Right cardiac atrium (tissue), 5 donors: ENCODE measurements at regions of chr15 and their contacts with region 1.

Region 1: GRCh38 chr15:63288778-63289378 is 11.5 kb downstream of the APH1B start:
- DNase-seq: no peak
- ATAC-seq: peak in 1 of 2 donors; percentile 57
- H3K4me3 ChIP-seq: no peak overlapping the region
- H3K27ac ChIP-seq: no peak overlapping the region
- H3K4me1 ChIP-seq: peaks cover 1% of the 10 kb centered on the region
- H3K27me3 ChIP-seq: no peaks in the 10 kb centered on the region

Region 2: DNA sequence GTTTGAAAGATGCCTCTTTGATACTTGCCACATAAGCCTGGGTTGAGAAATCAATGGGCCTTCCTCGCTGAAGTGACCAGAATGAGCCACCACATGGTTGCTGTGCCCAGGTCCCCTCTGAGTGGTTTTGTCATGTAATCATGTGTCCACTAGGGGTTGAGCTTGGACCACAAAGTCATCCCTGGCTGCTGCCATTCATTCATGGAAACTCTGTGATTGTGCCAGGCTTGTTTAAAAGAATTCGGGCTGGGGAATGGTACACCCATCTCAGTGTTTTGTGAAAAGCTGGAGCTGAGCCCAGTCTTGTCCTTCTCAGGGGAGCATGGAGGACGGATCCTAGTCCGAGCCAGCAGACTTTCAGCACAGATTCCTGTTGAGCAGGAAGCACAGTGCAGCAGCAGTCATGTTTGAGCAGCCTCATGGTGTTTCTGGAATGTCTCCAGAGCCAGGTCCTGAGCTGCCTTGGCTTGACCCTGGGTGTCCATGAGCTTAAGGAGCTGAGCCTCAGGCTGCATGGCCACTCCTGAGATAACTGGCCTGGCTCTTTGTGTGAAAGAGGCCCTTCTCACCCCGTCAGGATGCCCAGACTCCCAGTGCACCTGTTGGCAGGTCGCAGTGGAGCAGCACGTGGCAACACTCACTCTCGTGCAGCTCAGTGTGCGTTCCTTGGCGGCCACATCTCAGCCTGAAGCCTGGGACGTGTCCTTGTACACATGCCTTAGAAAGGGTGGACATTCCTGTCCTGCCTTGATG is 506.7 kb before region 1 on chr15:
- intact Hi-C with region 1: no loop called
- DNase-seq: peak; percentile 87 to 90 (median 87)
- ATAC-seq: peak; percentile 92
- H3K4me3 ChIP-seq: no peak overlapping the region
- H3K27ac ChIP-seq: peak overlapping the region; percentile 78
- H3K4me1 ChIP-seq: peaks cover 5% of the 10 kb centered on the region
- H3K27me3 ChIP-seq: no peaks in the 10 kb centered on the region

Region 3: DNA sequence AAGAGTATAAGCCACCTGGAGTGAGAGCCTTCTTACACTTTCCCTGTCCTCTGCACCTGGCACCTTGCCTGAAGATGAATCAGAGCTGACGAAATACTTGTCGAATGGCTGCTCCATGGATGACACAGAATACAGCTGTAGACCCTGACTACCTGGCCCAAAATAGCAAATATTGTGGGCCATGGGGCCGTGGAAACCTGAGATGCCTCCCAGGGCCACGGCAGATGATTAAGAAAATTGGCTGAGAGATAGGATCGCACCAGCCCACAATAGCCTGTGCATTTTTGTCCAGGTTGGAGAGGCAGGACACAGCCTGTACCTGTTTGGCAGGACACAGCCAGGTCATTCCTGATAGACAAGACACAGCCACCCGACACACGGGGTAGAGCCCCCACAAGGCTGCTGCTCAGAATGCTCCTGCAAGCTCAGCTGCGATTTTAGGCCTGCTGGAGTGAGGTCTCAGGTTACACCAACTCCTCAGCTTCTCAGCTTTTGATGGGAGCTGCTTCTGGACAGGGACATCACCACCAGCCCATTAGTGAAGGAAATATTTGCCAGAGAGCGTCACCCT is 269.3 kb before region 1 on chr15:
- intact Hi-C with region 1: no loop called
- DNase-seq: peak in 1 of 3 donors; percentile 16
- ATAC-seq: no peak
- H3K4me3 ChIP-seq: no peak overlapping the region
- H3K27ac ChIP-seq: no peak overlapping the region
- H3K4me1 ChIP-seq: peaks cover 7% of the 10 kb centered on the region
- H3K27me3 ChIP-seq: no peaks in the 10 kb centered on the region

Region 4: GRCh38 chr15:63389902-63390670 is 101.2 kb after region 1 on chr15:
- intact Hi-C with region 1: loop called in 1 of 4 experiments (anchors 5 kb)
- DNase-seq: peak in 1 of 3 donors; percentile 73
- ATAC-seq: no peak
- H3K4me3 ChIP-seq: no peak overlapping the region
- H3K27ac ChIP-seq: no peak overlapping the region
- H3K4me1 ChIP-seq: no peaks in the 10 kb centered on the region
- H3K27me3 ChIP-seq: no peaks in the 10 kb centered on the region

Region 5: DNA sequence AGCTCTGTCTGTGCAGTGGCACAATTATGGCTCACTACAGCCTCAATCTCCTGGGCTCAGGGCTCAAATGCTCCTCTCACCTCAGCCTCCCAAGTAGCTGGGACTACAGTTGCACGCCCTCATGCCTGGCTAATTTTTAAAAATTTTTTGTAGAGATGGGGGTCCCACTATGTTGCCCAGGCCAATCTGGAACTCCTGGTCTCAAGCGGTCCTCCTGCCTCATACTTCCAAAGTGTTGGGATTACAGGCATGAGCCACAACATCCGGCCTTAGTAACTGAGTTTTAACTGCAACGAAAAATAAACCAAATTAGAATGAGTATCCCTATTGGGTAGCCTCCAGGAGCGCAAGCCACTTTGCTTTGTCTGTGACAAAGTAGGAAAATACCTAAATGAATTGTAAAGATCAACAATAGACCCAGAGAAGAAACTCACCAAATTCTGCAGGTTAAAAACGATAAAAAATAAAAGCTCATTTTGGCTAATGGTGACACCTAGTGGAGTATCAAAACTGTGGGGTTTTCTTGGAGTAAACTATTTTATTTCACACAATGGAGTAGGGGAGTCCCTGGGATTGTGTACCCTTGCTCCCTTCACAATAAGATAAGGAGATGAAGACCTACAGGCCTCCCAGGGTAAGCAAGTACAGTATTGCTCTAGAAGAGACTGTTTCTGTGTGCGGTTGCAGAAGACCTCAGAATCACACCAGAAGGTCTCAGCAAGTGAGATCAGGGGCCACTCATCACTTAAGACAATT is 113.8 kb after region 1 on chr15:
- intact Hi-C with region 1: loop called (anchors 2 to 5 kb)
- DNase-seq: no peak
- ATAC-seq: peak; percentile 41 to 52
- H3K4me3 ChIP-seq: no peak overlapping the region
- H3K27ac ChIP-seq: no peak overlapping the region
- H3K4me1 ChIP-seq: no peaks in the 10 kb centered on the region
- H3K27me3 ChIP-seq: no peaks in the 10 kb centered on the region